ENCODE measurements at regions of chr3 and their contacts with region 1.

Region 1: GRCh38 chr3:18847583-18848197 is 300.6 kb upstream of the KCNH8 start:
- DNase-seq: no peak
- ATAC-seq: peak; percentile 60
- H3K4me3 Mint-ChIP-seq: no peak overlapping the region
- H3K27ac Mint-ChIP-seq: no peak overlapping the region
- H3K4me1 Mint-ChIP-seq: peaks cover 8% of the 10 kb centered on the region
- H3K27me3 Mint-ChIP-seq: no peaks in the 10 kb centered on the region
- CTCF ChIP-seq: peak; percentile 66

Region 2: GRCh38 chr3:18835021-18835420 is 12.7 kb before region 1 on chr3:
- CTCF ChIA-PET with region 1: interaction called, 12 read pairs
- POLR2A ChIA-PET with region 1: interaction called, 4 read pairs
- intact Hi-C with region 1: no loop called
- DNase-seq: no peak
- ATAC-seq: no peak
- H3K4me3 Mint-ChIP-seq: no peak overlapping the region
- H3K27ac Mint-ChIP-seq: no peak overlapping the region
- H3K4me1 Mint-ChIP-seq: peaks cover 20% of the 10 kb centered on the region
- H3K27me3 Mint-ChIP-seq: no peaks in the 10 kb centered on the region
- CTCF ChIP-seq: no peak

Region 3: DNA sequence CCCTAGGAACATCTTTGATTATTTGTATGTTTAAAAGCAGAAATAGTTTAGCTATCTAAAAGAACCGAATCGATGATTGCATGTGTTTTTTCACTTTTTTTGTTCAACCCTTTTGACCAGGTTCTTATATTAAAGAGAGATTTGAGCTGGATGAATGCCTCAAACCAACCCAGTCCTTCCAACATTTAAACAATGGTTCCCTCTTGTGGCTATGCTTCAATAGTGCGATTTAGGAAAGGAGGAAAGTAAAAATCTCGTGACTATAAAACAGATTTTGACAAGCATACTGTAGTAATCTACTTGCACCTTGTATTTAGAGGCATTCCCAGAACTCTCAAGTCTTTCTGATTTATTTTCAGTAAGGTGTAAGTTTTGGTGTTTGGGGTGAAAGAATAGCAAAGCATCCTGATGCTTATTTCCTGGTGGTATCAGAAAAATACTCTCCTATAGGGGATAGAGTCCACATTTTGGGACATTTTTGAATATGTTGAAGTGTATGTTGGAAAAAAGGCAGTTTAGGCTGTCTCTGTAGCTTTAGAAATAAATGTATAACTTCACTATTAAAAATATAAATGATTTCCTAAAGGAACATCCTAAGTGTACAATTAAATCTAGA is 141.0 kb after region 1 on chr3:
- CTCF ChIA-PET with region 1: interaction called, 35 read pairs
- POLR2A ChIA-PET with region 1: no interaction called
- intact Hi-C with region 1: loop called (anchors 2 kb)
- DNase-seq: no peak
- ATAC-seq: peak; percentile 72
- H3K4me3 Mint-ChIP-seq: peak overlapping the region; percentile 58
- H3K27ac Mint-ChIP-seq: no peak overlapping the region
- H3K4me1 Mint-ChIP-seq: peaks cover 18% of the 10 kb centered on the region
- H3K27me3 Mint-ChIP-seq: peaks cover 16% of the 10 kb centered on the region
- CTCF ChIP-seq: peak; percentile 78

Measured in activated CD8-positive, alpha-beta T cell treated with anti-CD3 and anti-CD28 coated beads for 36 hours (primary cell).